ENCODE measurements at regions of chr9 and their contacts with region 1.

Region 1: DNA sequence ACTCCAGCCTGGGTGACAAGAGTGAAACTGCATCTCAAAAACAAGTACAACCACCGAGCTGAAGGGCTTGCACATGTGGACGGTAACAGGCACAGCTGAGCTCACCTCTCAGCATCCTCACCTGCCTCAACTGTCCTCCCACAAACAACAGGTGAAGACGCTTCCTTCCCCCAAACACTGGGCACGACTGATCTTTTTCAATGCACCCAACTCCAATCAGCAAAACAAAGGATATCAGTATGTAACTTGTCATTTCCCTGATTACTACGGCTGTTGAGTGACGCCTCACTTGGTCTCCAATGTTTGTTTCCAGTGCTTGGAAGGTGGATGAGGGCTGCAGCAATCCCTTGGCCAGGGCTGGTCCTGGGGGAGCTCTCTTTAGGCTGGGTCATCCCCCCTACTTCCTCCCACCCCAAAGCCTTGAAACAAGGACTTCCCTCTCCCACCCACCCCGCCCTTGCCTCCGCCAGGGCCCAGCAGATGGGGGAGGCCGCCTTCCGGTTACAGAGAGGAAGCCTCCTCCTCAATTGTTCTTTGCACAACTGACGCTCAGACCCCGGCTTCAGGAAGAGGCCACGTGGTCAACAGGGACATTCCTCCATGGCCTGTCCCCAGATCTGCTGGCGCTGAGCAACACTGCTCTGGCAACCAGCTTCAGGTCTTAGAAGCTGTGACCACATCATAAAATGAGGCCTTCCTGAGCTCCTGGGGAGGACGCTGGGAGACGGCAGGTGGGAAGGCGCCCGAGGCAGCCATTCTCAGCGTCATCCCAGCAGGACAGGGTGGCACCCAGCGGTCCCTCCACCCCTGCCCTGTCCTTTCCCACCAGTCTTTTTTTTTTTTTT is 5.9 kb downstream of the FAM78A start:
- DNase-seq: no peak
- ATAC-seq: peak; percentile 31
- H3K4me3 ChIP-seq: peak overlapping the region; percentile 99
- H3K27ac ChIP-seq: peak overlapping the region; percentile 92
- H3K4me1 ChIP-seq: peaks cover 46% of the 10 kb centered on the region
- H3K27me3 ChIP-seq: no peaks in the 10 kb centered on the region
- CTCF ChIP-seq: no peak
- EP300 ChIP-seq: no peak
- POLR2A ChIP-seq: peak; percentile 46; the same call in 1 of the 2 replicates
- RAD21 ChIP-seq: no peak

Region 2: GRCh38 chr9:129835021-129835871 is 1435.1 kb before region 1 on chr9 and contains the starts of genes C9orf78 and USP20:
- CTCF ChIA-PET with region 1: no interaction called
- POLR2A ChIA-PET with region 1: no interaction called
- RAD21 ChIA-PET with region 1: no interaction called
- SMC1A ChIA-PET with region 1: no interaction called
- in situ Hi-C with region 1: loop called (anchors 25 kb)
- intact Hi-C with region 1: no loop called
- DNase-seq: peak; percentile 86
- ATAC-seq: peak; percentile 97
- H3K4me3 ChIP-seq: peak within 1 kb of the TSS; percentile 96
- H3K27ac ChIP-seq: peak within 1 kb of the TSS; percentile 74
- H3K4me1 ChIP-seq: peaks cover 14% of the 10 kb centered on the region
- H3K27me3 ChIP-seq: no peaks in the 10 kb centered on the region
- CTCF ChIP-seq: no peak
- EP300 ChIP-seq: no peak
- POLR2A ChIP-seq: peak; percentile 95
- RAD21 ChIP-seq: no peak
- polyA plus RNA-seq, gene C9orf78: 28.6 to 60.9 TPM
- polyA plus RNA-seq, gene USP20: 0.66 to 1.1 TPM

Region 3: DNA sequence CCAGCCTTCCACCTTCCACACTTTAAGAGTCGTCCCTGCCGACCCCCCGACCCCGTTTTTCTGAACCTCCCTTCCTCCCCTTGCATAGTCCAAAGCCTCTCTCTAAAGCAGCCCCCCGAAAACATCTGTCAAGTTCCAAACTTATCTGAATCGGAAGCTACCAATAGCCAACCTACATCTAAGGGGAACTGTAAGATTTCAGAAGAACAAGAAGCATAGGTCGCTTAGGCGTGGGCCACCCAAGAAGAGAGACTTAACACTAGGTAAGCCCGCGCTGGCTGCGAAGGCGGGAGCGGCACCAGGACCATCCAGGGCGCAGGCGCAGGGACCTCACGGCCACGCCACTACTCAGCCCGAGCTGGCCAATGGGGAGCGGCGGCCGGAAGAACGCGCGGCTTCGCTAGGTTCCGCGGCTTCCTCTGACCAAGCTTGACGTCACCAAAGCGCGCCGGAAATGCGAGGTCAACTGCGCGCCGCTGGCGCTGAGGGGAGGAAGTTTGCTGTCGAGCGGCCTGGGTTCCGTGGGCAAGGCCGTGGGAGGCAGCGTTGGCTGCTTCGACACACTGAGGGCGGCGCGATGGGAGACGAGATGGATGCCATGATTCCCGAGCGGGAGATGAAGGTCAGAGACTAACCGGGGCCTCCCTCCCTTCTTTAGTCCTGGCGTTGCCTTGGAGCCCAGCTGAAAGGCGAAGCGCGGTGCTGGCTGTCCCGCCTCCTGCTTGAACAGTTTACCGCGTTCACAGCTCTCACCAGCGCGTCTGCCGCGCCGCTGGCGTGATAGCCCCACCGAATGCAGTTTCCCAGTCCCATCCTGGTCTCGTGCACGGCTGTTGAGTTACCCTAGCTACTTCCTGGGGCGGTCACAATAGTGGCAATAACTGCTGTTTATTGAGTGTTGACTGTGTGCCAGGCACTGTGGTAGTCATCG is 145.0 kb before region 1 on chr9 and contains the start of gene NUP214:
- CTCF ChIA-PET with region 1: no interaction called
- POLR2A ChIA-PET with region 1: no interaction called
- RAD21 ChIA-PET with region 1: no interaction called
- SMC1A ChIA-PET with region 1: no interaction called
- in situ Hi-C with region 1: no loop called
- intact Hi-C with region 1: loop called (anchors 5 kb)
- DNase-seq: peak; percentile 88
- ATAC-seq: peak; percentile 100
- H3K4me3 ChIP-seq: peak within 1 kb of the TSS; percentile 96
- H3K27ac ChIP-seq: peak within 1 kb of the TSS; percentile 79
- H3K4me1 ChIP-seq: peaks cover 7% of the 10 kb centered on the region
- H3K27me3 ChIP-seq: no peaks in the 10 kb centered on the region
- CTCF ChIP-seq: no peak
- EP300 ChIP-seq: peak in 1 of 2 experiments; percentile 48; a peak in 1 of 4 replicates
- POLR2A ChIP-seq: peak; percentile 99
- RAD21 ChIP-seq: no peak
- polyA plus RNA-seq, gene NUP214: 16.9 to 18.3 TPM

Region 4: GRCh38 chr9:131237931-131238401 is 32.4 kb before region 1 on chr9:
- CTCF ChIA-PET with region 1: interaction called, 8 read pairs
- POLR2A ChIA-PET with region 1: interaction called, 6 read pairs
- RAD21 ChIA-PET with region 1: interaction called, 8 read pairs
- SMC1A ChIA-PET with region 1: interaction called, 17 read pairs
- in situ Hi-C with region 1: no loop called
- intact Hi-C with region 1: no loop called
- DNase-seq: peak; percentile 76
- ATAC-seq: peak; percentile 99
- H3K4me3 ChIP-seq: peak overlapping the region; percentile 26; the same call in 1 of the 2 replicates
- H3K27ac ChIP-seq: peak overlapping the region; percentile 86
- H3K4me1 ChIP-seq: peaks cover 17% of the 10 kb centered on the region
- H3K27me3 ChIP-seq: no peaks in the 10 kb centered on the region
- CTCF ChIP-seq: no peak
- EP300 ChIP-seq: no peak
- POLR2A ChIP-seq: peak; percentile 86
- RAD21 ChIP-seq: 0 out of 2 replicates have a peak, but pooled peaks have one; percentile 7

Region 5: DNA sequence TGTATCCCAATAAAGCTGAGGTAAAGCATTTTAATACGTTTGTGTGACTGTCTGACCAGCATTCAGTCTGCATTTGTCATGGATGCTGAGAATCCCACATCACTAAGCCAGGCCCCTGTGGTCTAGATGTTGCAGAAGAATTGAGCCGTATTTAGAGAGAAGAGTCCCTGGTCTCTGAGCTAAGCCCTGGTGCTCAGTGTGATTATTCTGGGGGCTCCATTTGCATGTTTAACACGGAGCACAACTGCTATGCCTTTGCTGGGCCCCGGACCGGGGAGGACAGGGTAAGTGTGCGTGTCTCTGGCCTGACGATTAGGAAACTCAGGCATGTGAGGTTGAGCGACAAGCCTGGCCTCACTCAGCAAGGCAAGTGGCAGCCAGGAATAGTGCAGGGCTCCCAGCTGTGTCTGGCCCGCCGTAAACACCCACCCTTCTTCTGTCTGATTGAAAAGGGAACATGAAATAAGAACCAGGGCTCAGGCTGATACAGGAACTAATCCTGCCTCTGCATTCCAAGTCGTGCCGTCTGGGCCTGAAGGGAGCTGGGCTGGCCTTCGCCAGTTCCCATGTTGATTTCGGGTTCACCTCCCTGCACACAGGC is 16.4 kb before region 1 on chr9:
- CTCF ChIA-PET with region 1: interaction called, 151 read pairs
- POLR2A ChIA-PET with region 1: interaction called, 267 read pairs
- RAD21 ChIA-PET with region 1: interaction called, 181 read pairs
- SMC1A ChIA-PET with region 1: interaction called, 154 read pairs
- in situ Hi-C with region 1: no loop called
- intact Hi-C with region 1: loop called (anchors 1 kb)
- DNase-seq: no peak
- ATAC-seq: peak; percentile 4
- H3K4me3 ChIP-seq: no peak overlapping the region
- H3K27ac ChIP-seq: peak overlapping the region; percentile 78
- H3K4me1 ChIP-seq: peaks cover 48% of the 10 kb centered on the region
- H3K27me3 ChIP-seq: no peaks in the 10 kb centered on the region
- CTCF ChIP-seq: no peak
- EP300 ChIP-seq: no peak
- POLR2A ChIP-seq: peak; percentile 65
- RAD21 ChIP-seq: no peak

Region 6: GRCh38 chr9:131349881-131350563 is 79.6 kb after region 1 on chr9:
- CTCF ChIA-PET with region 1: no interaction called
- POLR2A ChIA-PET with region 1: no interaction called
- RAD21 ChIA-PET with region 1: no interaction called
- SMC1A ChIA-PET with region 1: no interaction called
- in situ Hi-C with region 1: no loop called
- intact Hi-C with region 1: no loop called
- DNase-seq: no peak
- ATAC-seq: peak; percentile 100
- H3K4me3 ChIP-seq: no peak overlapping the region
- H3K27ac ChIP-seq: no peak overlapping the region
- H3K4me1 ChIP-seq: no peaks in the 10 kb centered on the region
- H3K27me3 ChIP-seq: no peaks in the 10 kb centered on the region
- CTCF ChIP-seq: peak; percentile 85 to 91 (median 88)
- EP300 ChIP-seq: no peak
- POLR2A ChIP-seq: no peak
- RAD21 ChIP-seq: peak; percentile 87

Region 7: DNA sequence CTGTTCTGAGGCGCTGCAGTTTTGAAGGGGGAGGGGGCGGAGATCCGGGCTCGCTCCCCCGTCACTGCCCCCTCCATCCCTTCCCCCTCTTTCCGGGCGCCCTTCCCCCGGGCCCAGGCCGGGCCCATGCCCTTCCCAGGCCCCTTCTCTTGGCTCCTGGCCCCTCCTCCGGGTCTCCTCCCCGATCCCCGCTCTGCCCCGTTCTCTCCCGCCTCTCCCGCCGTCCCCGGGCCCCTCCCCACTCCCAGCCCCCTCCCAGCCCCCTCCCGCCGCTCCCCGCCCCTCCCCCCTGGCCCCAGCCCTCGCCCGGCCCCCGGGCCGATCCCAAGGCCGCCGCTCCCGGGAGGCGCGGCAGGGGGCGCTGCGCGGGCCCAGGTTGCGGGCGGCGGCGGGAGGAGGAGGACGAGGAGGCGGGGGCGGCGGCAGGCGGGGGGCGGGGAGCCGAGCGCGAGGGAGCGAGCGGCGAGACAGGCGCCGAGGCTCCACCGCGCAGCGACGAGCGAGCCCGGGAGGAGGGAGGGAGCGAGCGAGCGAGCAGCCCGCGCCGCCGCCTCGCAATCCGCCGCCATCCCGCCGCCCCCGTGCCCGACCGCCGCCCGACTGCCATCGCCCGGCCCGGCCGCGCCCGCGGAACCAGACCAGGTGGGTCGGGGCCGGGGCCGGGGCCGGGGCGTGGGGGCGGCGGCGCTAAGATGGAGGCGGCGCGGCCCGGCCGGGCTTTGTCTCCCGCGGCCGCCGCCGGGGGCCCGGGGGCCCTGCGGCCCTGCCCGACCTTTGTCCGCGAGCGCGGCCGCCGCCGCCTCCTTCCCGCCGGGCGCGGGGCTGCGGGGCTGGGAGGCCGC is 123.5 kb after region 1 on chr9 and contains the start of gene PRRC2B:
- CTCF ChIA-PET with region 1: no interaction called
- POLR2A ChIA-PET with region 1: no interaction called
- RAD21 ChIA-PET with region 1: no interaction called
- SMC1A ChIA-PET with region 1: no interaction called
- in situ Hi-C with region 1: no loop called
- intact Hi-C with region 1: loop called (anchors 5 kb)
- DNase-seq: no peak
- ATAC-seq: peak; percentile 57
- H3K4me3 ChIP-seq: peak within 1 kb of the TSS; percentile 79
- H3K27ac ChIP-seq: peak within 1 kb of the TSS; percentile 87
- H3K4me1 ChIP-seq: peaks cover 25% of the 10 kb centered on the region
- H3K27me3 ChIP-seq: no peaks in the 10 kb centered on the region
- CTCF ChIP-seq: peak in 2 of 3 experiments; percentile 51 to 57; a peak in 4 of 6 replicates
- EP300 ChIP-seq: no peak
- POLR2A ChIP-seq: peak; percentile 92
- RAD21 ChIP-seq: peak; percentile 66
- polyA plus RNA-seq, gene PRRC2B: 0.84 to 2.0 TPM